ENCODE measurements at regions of chr19 and their contacts with region 1.

Region 1: DNA sequence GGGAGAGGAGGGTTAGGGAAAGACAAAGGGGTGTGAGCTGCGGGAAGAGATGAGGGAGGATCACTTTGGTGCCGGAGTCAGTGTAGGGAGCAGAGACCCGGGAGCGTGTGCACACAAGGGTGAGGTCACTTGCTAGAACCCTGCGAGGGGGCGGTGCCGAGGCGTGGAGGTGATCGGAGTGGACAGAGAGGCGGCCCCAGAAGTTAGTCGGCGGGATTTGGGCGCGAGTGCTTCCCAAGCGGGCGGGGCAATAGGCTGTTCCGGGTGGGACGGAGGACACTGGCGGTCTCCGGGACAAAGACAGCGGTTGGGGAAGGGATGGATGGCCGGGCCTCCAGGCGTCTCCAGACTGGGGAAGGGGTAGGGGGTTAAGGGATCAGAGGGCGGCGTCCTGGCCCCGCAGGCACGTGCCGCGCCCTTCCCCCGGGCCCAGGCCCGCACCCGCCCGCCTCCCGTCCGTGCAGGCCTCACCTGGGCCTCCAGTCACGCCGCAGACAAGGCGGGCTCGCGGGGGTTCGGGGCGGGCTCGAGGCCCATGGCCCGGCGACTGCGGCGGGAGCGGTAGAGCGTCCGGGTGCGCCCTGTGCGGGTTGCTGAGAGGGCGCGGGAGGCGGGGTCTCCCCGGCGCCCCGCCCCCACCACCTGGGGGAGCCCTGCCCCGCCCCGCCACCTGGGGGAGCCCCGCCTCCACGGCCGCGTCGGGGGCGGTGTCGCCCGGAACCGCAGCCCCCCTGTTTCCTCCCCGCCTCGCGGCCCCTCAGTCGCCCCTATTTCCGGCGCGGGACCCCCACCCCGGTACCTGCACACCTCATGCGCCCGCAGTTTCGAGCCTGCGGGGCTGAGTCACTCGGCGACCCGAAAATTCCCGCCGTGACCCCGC is at the start of gene LPAR2:
- DNase-seq: peak; percentile 65
- H3K4me3 Mint-ChIP-seq: peak within 1 kb of the TSS; percentile 89
- H3K27ac Mint-ChIP-seq: peak within 1 kb of the TSS; percentile 85
- H3K4me1 Mint-ChIP-seq: peaks cover 29% of the 10 kb centered on the region
- H3K27me3 Mint-ChIP-seq: no peaks in the 10 kb centered on the region
- total RNA-seq, gene LPAR2: 20.2 to 20.7 TPM

Region 2: GRCh38 chr19:19562665-19563347 is 65.1 kb before region 1 on chr19:
- CTCF ChIA-PET with region 1: no interaction called
- intact Hi-C with region 1: loop called (anchors 2 kb)
- DNase-seq: peak; percentile 65
- H3K4me3 Mint-ChIP-seq: no peak overlapping the region
- H3K27ac Mint-ChIP-seq: peak overlapping the region; percentile 50
- H3K4me1 Mint-ChIP-seq: peaks cover 22% of the 10 kb centered on the region
- H3K27me3 Mint-ChIP-seq: no peaks in the 10 kb centered on the region

Region 3: GRCh38 chr19:19591133-19591825 is 36.6 kb before region 1 on chr19:
- CTCF ChIA-PET with region 1: no interaction called
- intact Hi-C with region 1: loop called (anchors 2 kb)
- DNase-seq: peak; percentile 91
- H3K4me3 Mint-ChIP-seq: peak overlapping the region; percentile 47
- H3K27ac Mint-ChIP-seq: peak overlapping the region; percentile 93
- H3K4me1 Mint-ChIP-seq: peaks cover 71% of the 10 kb centered on the region
- H3K27me3 Mint-ChIP-seq: no peaks in the 10 kb centered on the region

Measured in activated naive CD4-positive, alpha-beta T cell treated with anti-CD3 and anti-CD28 coated beads for 36 hours (primary cell).